ENCODE measurements at regions of chr5 and their contacts with region 1.

Region 1: DNA sequence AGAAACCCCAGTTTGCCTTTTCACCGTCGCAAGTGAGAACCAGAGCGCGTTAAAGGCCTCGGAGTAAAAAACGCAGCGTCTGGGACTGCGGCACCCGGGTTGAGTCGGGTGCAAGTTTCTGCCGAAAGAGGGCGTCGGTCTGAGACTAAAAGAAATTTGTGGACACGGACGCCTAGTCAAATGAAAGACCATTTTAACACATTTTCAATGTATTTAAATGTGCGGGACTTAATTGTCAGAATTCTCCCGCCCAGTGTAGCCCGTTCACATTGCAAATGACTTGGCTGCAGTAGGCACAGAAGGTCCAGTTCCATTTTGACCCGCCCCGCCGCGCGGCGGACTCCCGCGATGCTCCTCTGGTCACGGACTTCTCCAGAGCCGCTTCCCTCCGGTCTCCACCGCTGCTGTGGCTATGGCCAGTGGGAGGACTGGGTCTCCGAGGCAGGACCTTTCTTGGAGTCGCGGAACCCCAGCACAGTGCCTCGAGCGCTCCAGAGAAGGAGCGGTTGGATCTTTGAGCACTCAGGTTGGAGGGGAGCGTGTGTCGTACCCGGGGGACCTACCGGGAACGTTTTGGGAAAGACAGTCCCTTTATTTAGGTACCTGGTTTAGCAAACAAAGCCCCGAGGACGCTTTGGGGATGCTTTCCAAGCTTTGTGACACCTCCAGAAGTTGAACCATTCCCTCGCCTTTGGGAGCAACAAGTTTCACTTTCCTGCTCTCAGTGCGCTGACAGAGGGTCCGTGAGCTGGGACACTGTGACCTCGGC is 1.2 kb upstream of the NPR3 start:
- DNase-seq: peak; percentile 85
- H3K4me3 ChIP-seq: peak overlapping the region; percentile 52
- H3K27ac ChIP-seq: no peak overlapping the region
- H3K4me1 ChIP-seq: peaks cover 4% of the 10 kb centered on the region
- H3K27me3 ChIP-seq: peaks cover 45% of the 10 kb centered on the region
- CTCF ChIP-seq: peak; percentile 84

Region 2: GRCh38 chr5:32734827-32735378 is 24.9 kb after region 1 on chr5:
- CTCF ChIA-PET with region 1: no interaction called
- POLR2A ChIA-PET with region 1: no interaction called
- intact Hi-C with region 1: no loop called
- DNase-seq: no peak
- H3K4me3 ChIP-seq: no peak overlapping the region
- H3K27ac ChIP-seq: no peak overlapping the region
- H3K4me1 ChIP-seq: no peaks in the 10 kb centered on the region
- H3K27me3 ChIP-seq: no peaks in the 10 kb centered on the region
- CTCF ChIP-seq: no peak

Region 3: DNA sequence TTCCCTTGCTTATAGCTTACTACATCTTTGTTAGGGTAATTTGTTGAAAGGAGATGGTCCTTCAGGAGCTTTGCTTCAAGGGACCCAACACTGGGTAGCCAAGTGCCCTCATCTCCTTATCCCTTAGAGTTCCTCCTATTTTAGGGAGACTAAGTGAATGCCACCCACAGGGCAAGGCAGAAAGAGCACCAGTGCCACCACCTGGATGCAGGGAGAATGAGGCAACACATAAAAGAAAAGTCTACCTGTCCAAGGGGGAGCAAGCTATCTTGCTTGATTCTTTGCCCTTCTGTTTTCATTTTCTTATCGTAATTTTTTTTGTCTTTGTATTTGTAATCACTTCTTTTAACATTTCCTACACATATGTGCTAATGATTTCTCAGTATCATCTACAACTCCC is 206.7 kb after region 1 on chr5:
- CTCF ChIA-PET with region 1: no interaction called
- POLR2A ChIA-PET with region 1: no interaction called
- intact Hi-C with region 1: loop called (anchors 2 kb)
- DNase-seq: peak; percentile 32
- H3K4me3 ChIP-seq: no peak overlapping the region
- H3K27ac ChIP-seq: no peak overlapping the region
- H3K4me1 ChIP-seq: no peaks in the 10 kb centered on the region
- H3K27me3 ChIP-seq: no peaks in the 10 kb centered on the region
- CTCF ChIP-seq: peak; percentile 40

Region 4: DNA sequence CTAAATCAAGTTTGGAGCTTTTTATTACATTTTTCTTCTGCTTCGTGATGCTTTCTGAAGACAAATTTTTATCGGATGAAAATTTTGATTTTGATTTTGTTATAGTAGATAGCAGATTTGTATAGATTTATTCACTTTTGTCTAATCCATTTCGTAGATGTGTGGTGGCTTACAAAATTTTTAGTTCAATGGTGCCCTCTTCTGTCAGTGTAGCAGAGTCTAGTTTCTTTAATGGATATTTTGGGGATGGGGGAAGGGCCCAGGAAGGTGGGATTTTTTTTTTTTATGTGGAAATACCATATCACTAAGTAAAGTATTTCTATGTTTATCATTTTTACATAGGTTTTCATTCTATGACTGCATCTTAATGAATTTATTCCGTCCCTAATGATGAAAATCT is 470.9 kb after region 1 on chr5:
- CTCF ChIA-PET with region 1: no interaction called
- POLR2A ChIA-PET with region 1: no interaction called
- intact Hi-C with region 1: loop called (anchors 2 kb)
- DNase-seq: peak; percentile 25
- H3K4me3 ChIP-seq: no peak overlapping the region
- H3K27ac ChIP-seq: no peak overlapping the region
- H3K4me1 ChIP-seq: no peaks in the 10 kb centered on the region
- H3K27me3 ChIP-seq: no peaks in the 10 kb centered on the region
- CTCF ChIP-seq: peak; percentile 55; the same call in 1 of the 2 replicates

Region 5: DNA sequence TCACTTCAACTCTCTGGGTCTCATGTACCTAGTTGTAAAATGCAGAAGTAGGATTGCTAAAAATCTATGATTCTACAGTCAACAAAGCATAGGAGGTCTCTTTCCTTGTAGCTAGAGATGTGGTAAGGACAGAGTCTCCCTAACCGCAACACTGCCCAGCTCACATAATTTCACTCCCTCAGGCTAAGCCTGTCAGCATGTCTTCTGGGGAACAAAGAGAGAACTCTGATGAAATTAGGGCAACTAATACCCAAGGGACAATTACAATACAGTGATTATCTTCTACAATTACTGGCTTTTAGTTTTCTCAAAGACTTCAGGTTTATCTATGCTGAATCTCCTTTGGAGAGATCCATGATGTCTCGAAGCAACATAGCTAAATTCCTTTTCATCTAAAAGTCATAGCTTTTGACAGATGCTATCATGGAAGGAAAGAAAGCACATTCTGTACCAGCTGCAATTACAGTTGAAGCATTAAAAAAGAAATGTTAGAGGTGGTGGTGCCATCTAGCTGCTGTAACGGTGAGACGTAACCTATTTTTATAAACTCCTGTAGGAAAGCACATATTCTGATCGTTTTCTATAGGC is 589.8 kb after region 1 on chr5:
- CTCF ChIA-PET with region 1: interaction called, 6 read pairs
- POLR2A ChIA-PET with region 1: no interaction called
- intact Hi-C with region 1: loop called (anchors 5 kb)
- DNase-seq: peak; percentile 79
- H3K4me3 ChIP-seq: no peak overlapping the region
- H3K27ac ChIP-seq: no peak overlapping the region
- H3K4me1 ChIP-seq: peaks cover 9% of the 10 kb centered on the region
- H3K27me3 ChIP-seq: no peaks in the 10 kb centered on the region
- CTCF ChIP-seq: peak; percentile 65

Region 6: DNA sequence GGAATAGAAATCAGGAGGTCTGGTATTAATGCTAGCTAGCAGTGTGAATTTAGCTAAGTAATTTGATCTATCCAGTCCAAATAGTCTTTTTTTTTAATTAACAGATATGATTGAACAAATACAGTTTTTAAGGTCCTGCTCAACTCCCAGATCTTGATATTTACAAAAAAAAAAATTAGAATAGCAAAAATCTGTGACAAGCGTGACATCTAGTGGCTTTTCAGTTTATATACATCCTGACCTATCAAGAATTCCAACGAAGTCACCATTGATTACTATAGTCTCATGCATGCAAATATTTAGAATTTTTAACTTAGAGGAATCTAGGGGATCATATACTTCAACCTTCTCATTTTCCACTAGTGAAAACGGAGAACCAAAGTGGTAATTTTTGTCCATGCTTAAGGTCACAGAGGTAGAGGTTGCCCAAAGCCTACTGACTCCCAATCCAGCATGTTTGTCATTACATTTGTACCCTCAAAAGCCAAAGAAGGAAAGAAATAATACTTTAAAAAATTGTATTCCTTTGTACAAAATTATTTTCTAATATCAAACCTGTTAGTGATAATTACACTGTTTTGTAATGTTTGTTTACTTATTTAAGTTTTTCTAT is 713.2 kb after region 1 on chr5:
- CTCF ChIA-PET with region 1: no interaction called
- POLR2A ChIA-PET with region 1: no interaction called
- intact Hi-C with region 1: loop called (anchors 5 kb)
- DNase-seq: peak; percentile 48
- H3K4me3 ChIP-seq: no peak overlapping the region
- H3K27ac ChIP-seq: no peak overlapping the region
- H3K4me1 ChIP-seq: no peaks in the 10 kb centered on the region
- H3K27me3 ChIP-seq: peaks cover 21% of the 10 kb centered on the region
- CTCF ChIP-seq: peak; percentile 62